ENCODE measurements at regions of chr6 and their contacts with region 1.

Region 1: GRCh38 chr6:111259089-111259831 is 172.0 kb downstream of the SLC16A10 start:
- DNase-seq: peak; percentile 97 to 98
- H3K4me3 ChIP-seq: peak overlapping the region; percentile 84
- H3K27ac ChIP-seq: peak overlapping the region; percentile 58; the same call in 1 of the 2 replicates
- H3K4me1 ChIP-seq: peaks cover 34% of the 10 kb centered on the region
- H3K27me3 ChIP-seq: no peaks in the 10 kb centered on the region
- CTCF ChIP-seq: peak; percentile 96

Region 2: DNA sequence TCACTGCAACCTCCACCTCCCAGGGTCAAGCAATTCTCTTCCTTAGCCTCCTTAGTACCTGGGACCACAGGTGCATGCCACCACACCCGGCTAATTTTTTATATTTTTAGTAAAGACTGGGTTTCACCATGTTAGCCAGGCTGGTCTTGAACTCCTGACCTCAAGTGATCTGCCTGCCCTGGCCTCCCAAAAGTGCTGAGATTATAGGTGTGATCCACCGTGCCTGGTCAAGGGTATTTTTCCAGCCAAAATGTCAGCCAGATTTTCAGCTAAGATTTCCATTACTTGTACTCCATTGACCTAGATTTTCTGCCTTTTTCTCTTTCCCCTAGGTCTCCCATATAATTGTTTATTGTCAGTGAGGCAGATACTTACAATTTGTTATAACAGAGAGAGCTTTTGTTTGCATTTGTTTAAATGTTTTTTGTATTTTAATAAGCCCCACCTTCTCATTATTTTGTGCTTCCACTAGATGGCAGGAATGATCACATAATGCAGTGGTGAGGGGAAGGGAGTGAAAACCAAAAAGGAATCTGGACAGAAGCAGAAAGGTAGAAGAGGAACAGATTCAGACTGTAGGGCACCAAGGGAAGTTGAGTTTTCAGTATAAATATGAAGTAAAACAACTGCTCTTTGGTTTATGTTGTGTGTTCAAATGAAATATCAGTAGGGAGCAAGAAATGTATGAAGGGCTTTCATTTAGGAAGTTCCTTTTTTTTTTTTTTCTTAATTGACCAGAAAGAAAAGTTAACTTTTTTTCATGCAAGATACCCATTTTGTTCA is 247.7 kb before region 1 on chr6:
- CTCF ChIA-PET with region 1: interaction called, 3 read pairs
- POLR2A ChIA-PET with region 1: no interaction called
- intact Hi-C with region 1: loop called (anchors 1 kb)
- DNase-seq: peak in 1 of 2 experiments; percentile 9
- H3K4me3 ChIP-seq: no peak overlapping the region
- H3K27ac ChIP-seq: no peak overlapping the region
- H3K4me1 ChIP-seq: no peaks in the 10 kb centered on the region
- H3K27me3 ChIP-seq: no peaks in the 10 kb centered on the region
- CTCF ChIP-seq: peak; percentile 80

Region 3: DNA sequence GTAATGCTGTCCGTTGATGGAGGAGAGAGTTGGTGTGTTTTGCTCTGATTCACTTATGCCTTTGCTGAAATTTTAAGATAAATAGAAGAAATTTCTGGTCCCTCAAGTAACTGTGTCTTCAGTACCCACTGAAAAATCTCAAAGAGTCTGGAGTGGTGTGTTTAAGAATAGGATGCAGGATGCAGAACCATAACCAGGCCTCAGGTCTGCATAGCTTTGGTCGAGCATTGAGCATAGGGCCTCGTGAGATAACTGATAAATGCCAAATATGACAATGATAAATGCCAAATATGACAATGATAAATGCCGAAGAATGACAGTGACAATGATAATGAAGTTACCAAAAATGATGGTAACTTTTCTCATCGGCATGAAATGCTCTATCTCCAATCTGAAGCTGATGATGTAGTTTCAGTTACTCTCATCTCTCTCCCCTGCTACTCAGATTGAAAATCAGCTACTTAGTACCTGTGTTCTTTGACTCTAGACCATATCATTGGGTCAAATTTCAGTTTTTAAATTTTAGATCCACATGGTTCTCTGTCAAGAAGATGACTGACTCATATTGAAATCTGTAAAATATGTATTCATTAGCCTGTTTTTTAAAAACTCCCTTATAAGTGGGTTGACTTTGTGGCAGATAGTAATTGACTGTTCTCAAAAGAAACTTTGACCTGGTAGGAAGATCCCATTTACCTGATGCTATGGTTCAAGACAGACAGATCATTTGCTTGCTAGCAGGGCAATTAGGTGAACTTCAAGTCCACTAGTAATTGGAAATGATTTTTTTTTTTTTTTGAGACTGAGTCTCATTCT is 75.3 kb before region 1 on chr6:
- CTCF ChIA-PET with region 1: no interaction called
- POLR2A ChIA-PET with region 1: no interaction called
- intact Hi-C with region 1: no loop called
- DNase-seq: no peak
- H3K4me3 ChIP-seq: no peak overlapping the region
- H3K27ac ChIP-seq: no peak overlapping the region
- H3K4me1 ChIP-seq: no peaks in the 10 kb centered on the region
- H3K27me3 ChIP-seq: no peaks in the 10 kb centered on the region
- CTCF ChIP-seq: no peak

Region 4: DNA sequence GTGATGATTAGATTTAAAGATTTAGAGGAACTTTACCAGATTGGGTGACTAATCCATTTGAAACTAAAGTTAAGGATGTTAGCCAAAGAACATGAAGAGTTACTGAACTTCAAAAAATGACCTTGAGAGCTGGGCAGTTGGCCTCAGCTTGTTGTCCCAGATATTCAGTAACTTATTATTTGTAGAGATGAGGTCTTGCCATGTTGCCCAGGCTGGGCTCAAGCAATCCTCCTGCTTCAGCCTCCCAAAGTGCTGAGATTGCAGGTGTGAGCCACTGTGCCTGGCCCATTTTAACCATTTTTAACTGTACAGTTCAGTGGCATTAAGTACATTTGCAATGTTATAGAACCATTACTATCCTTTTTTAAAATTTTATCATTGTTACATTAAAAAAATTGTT is 10.5 kb before region 1 on chr6:
- CTCF ChIA-PET with region 1: no interaction called
- POLR2A ChIA-PET with region 1: no interaction called
- intact Hi-C with region 1: no loop called
- DNase-seq: no peak
- H3K4me3 ChIP-seq: no peak overlapping the region
- H3K27ac ChIP-seq: no peak overlapping the region
- H3K4me1 ChIP-seq: no peaks in the 10 kb centered on the region
- H3K27me3 ChIP-seq: no peaks in the 10 kb centered on the region
- CTCF ChIP-seq: no peak

Region 5: DNA sequence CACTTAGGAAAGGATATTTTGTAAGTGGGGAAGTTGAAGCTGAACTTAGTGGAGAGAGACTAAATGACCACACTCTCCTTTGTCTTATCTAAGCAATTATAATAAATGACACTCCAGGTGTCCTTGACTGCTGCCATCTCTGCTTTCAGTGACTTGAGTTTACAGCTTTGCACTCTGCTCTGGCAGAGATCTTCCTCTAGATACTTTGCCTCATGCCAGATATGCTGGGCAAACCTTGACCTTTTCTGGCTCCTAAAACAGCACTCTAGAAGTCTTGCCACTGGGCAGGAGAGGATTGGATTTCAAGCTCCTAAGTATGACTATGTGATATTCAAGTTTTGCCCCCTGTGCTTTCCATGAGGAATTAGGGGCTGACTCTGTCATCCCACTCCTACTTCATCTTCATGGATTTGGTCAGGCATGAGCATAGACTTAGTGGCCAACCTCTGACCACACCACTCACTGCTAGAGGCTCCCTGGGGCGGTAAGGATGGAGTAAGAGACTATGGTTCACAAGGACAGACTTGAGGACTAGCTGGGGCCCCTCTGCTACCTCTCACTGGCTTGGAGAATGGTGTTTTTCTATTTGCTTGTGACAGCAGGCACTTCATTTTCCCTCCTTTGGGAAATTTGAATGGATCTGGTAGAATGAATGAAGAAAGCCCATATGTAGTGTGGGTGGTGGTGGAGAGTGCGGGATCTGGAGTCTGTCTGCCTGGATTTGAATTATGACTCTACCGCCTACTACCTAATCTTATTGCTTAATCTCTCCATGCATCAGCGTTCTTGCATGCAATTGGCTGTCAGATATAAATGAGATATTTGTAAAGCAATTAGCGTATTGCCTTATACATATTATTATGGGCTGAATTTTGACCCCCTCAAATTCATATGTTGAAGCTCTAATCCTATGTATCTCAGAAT is 32.3 kb after region 1 on chr6:
- CTCF ChIA-PET with region 1: no interaction called
- POLR2A ChIA-PET with region 1: no interaction called
- intact Hi-C with region 1: no loop called
- DNase-seq: peak in 1 of 2 experiments; percentile 29
- H3K4me3 ChIP-seq: no peak overlapping the region
- H3K27ac ChIP-seq: no peak overlapping the region
- H3K4me1 ChIP-seq: no peaks in the 10 kb centered on the region
- H3K27me3 ChIP-seq: no peaks in the 10 kb centered on the region
- CTCF ChIP-seq: no peak

Region 6: DNA sequence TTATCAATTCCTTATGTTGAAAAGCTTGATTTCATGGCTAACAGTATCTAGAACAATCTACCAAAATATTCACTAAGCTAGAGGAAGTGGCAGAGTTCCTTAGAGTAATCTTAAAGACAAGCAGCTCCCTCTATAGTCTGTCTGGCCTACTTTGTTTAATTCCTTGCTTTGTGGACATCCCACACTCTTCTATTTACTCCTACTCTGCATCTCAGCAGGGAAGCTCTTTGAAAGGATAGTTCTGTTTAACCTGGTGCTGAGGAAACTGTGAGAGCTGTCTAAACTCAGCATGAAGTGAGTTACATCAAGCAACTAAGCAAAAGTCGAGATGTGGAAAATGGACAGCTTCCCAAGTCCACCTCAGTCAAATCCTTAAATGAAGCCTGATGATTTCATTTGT is 219.5 kb after region 1 on chr6:
- CTCF ChIA-PET with region 1: interaction called, 15 read pairs
- POLR2A ChIA-PET with region 1: no interaction called
- intact Hi-C with region 1: loop called (anchors 1 kb)
- DNase-seq: peak in 1 of 2 experiments; percentile 45
- H3K4me3 ChIP-seq: no peak overlapping the region
- H3K27ac ChIP-seq: peak overlapping the region; percentile 48
- H3K4me1 ChIP-seq: peaks cover 49% of the 10 kb centered on the region
- H3K27me3 ChIP-seq: no peaks in the 10 kb centered on the region
- CTCF ChIP-seq: peak; percentile 57; the same call in 1 of the 2 replicates

Region 7: DNA sequence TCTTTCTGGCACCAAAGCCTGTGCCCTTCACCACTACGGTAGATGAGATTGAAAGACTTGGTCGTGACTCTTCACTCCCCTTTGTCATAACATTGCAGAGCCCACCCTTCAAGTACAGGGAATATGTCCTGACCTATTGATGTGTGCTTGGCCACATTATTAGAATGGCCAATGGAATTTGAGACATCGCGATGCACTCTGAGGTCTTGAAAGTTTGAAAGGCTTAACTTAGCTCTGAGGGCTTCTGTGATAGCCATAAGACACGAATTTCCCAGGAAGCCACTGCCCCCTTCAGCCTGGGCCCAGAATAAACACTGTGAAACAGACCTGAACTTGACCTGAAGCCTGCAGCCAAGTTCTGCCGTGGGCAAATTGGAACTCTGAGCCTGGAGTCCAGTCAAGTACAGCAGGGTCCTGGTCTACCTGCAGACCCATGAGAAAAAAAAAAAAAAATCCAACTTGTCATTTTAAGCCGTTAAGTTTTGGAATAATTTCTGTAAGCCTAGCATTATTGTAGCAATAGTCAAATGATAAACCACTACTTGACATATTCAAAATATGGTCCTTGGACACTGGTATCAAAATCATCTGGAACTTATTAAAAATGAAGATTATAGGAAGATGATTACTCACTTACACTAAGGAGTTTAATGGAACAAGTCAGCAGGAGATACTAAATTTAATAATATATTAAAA is 383.4 kb after region 1 on chr6:
- CTCF ChIA-PET with region 1: interaction called, 7 read pairs
- POLR2A ChIA-PET with region 1: no interaction called
- intact Hi-C with region 1: loop called (anchors 1 kb)
- DNase-seq: peak; percentile 46 to 50
- H3K4me3 ChIP-seq: no peak overlapping the region
- H3K27ac ChIP-seq: no peak overlapping the region
- H3K4me1 ChIP-seq: no peaks in the 10 kb centered on the region
- H3K27me3 ChIP-seq: no peaks in the 10 kb centered on the region
- CTCF ChIP-seq: peak; percentile 71

Region 8: GRCh38 chr6:112113431-112113830 is 854.2 kb after region 1 on chr6:
- CTCF ChIA-PET with region 1: interaction called, 12 read pairs
- POLR2A ChIA-PET with region 1: no interaction called
- intact Hi-C with region 1: no loop called
- DNase-seq: no peak
- H3K4me3 ChIP-seq: no peak overlapping the region
- H3K27ac ChIP-seq: no peak overlapping the region
- H3K4me1 ChIP-seq: peaks cover 9% of the 10 kb centered on the region
- H3K27me3 ChIP-seq: no peaks in the 10 kb centered on the region
- CTCF ChIP-seq: no peak